ENCODE measurements at regions of chr1 and their contacts with region 1.

Region 1: GRCh38 chr1:198520524-198521254 is 19.8 kb downstream of the ATP6V1G3 start:
- DNase-seq: peak; percentile 21
- H3K4me3 Mint-ChIP-seq: peak overlapping the region; percentile 75
- H3K27ac Mint-ChIP-seq: peak overlapping the region; percentile 92
- H3K4me1 Mint-ChIP-seq: peaks cover 57% of the 10 kb centered on the region
- H3K27me3 Mint-ChIP-seq: no peaks in the 10 kb centered on the region

Region 2: DNA sequence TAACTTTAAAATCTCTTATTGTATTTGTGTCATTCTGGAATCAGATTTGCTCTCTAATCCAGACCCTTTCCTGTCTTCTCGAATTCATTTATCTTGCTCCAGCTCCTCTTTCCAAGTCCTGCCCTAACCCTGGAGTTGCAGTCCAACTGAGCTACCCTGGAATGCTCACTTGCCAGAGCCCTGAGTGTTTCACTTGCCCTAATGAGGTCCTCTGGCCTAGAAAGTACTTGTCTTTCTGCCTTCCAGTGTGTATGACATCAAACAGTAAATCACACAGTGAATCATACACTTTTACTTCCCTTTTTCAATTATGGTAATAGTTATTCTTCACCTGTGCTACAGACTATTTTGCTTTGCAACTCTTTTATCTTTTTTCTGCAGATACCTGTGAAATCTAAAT is 267.0 kb before region 1 on chr1:
- CTCF ChIA-PET with region 1: no interaction called
- intact Hi-C with region 1: loop called (anchors 1 kb)
- DNase-seq: no peak
- H3K4me3 Mint-ChIP-seq: no peak overlapping the region
- H3K27ac Mint-ChIP-seq: no peak overlapping the region
- H3K4me1 Mint-ChIP-seq: peaks cover 46% of the 10 kb centered on the region
- H3K27me3 Mint-ChIP-seq: no peaks in the 10 kb centered on the region

Region 3: DNA sequence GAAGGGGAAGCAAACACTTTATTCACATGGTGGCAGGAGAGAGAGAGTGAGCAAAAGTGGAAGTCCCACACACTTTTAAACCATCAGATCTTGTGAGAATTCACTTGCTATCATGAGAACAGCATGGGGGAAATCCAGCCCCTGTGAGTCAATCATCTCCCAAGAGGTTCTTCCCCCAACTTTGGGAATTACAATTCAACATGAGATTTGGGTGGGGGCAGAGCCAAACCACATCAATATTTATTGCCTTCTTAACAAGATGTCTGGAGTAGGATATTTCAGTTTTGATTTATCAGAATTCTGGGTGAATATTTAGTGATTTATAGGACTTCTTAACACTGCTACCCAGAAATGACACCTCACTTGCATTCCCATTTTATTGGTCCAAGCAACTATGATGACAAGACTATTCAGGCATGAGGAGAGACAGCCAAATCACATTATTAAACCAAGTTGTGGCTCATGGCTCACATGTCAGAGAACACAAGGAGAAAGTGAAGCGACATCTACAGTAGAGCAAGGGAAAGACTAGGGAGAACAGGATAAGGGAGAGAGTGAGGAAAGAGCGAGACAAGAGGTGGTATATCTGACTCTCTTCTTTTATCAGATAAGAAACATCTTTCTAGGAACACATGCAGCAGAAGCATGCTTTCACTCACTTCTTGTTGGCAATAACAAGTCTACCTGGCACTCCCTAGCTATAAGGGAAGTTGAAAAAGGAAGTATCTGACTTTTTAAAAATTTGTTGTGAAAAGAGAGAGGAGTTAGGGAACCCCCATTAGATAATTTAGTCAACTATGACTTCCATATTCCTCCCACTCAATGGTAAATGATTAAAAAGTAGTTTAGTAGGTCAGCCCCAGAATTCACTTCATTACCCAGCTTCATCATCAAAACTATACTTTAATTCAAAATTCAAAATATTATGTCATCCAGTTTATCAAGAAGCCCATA is 81.5 kb after region 1 on chr1:
- CTCF ChIA-PET with region 1: interaction called, 5 read pairs
- intact Hi-C with region 1: loop called (anchors 1 kb)
- DNase-seq: peak; percentile 87
- H3K4me3 Mint-ChIP-seq: peak overlapping the region; percentile 51
- H3K27ac Mint-ChIP-seq: peak overlapping the region; percentile 85
- H3K4me1 Mint-ChIP-seq: peaks cover 87% of the 10 kb centered on the region
- H3K27me3 Mint-ChIP-seq: no peaks in the 10 kb centered on the region

Region 4: GRCh38 chr1:198681831-198682759 is 161.4 kb after region 1 on chr1:
- CTCF ChIA-PET with region 1: interaction called, 6 read pairs
- intact Hi-C with region 1: loop called (anchors 1 kb)
- DNase-seq: peak; percentile 86
- H3K4me3 Mint-ChIP-seq: peak overlapping the region; percentile 61
- H3K27ac Mint-ChIP-seq: peak overlapping the region; percentile 99
- H3K4me1 Mint-ChIP-seq: peaks cover 86% of the 10 kb centered on the region
- H3K27me3 Mint-ChIP-seq: no peaks in the 10 kb centered on the region

Region 5: GRCh38 chr1:198922638-198923430 is 402.1 kb after region 1 on chr1:
- CTCF ChIA-PET with region 1: no interaction called
- intact Hi-C with region 1: loop called (anchors 1 kb)
- DNase-seq: no peak
- H3K4me3 Mint-ChIP-seq: no peak overlapping the region
- H3K27ac Mint-ChIP-seq: peak overlapping the region; percentile 79
- H3K4me1 Mint-ChIP-seq: peaks cover 71% of the 10 kb centered on the region
- H3K27me3 Mint-ChIP-seq: no peaks in the 10 kb centered on the region

Region 6: GRCh38 chr1:199226163-199226562 is 705.5 kb after region 1 on chr1:
- CTCF ChIA-PET with region 1: no interaction called
- intact Hi-C with region 1: loop called (anchors 1 kb)
- DNase-seq: peak; percentile 66
- H3K4me3 Mint-ChIP-seq: peak overlapping the region; percentile 46
- H3K27ac Mint-ChIP-seq: peak overlapping the region; percentile 27
- H3K4me1 Mint-ChIP-seq: peaks cover 23% of the 10 kb centered on the region
- H3K27me3 Mint-ChIP-seq: no peaks in the 10 kb centered on the region

Measured in activated naive CD4-positive, alpha-beta T cell treated with anti-CD3 and anti-CD28 coated beads for 36 hours (primary cell).